HCT116 (cell line): ENCODE measurements at regions of chr2 and their contacts with region 1.

Region 1: GRCh38 chr2:68157402-68158133 is at the start of gene PNO1:
- DNase-seq: peak; percentile 92
- ATAC-seq: peak; percentile 93
- H3K4me3 ChIP-seq: peak within 1 kb of the TSS; percentile 77 to 92
- H3K27ac ChIP-seq: peak within 1 kb of the TSS; percentile 85
- H3K4me1 ChIP-seq: peaks cover 3 to 13% of the 10 kb centered on the region in 2 experiments; a peak in 3 of 4 replicates
- H3K27me3 ChIP-seq: no peaks in the 10 kb centered on the region
- CTCF ChIP-seq: no peak
- POLR2A ChIP-seq: peak; percentile 46
- RAD21 ChIP-seq: no peak
- total RNA-seq, gene PNO1: 23.3 TPM

Region 2: GRCh38 chr2:68062680-68063387 is 94.7 kb before region 1 on chr2 and contains the start of gene C1D:
- CTCF ChIA-PET with region 1: no interaction called
- POLR2A ChIA-PET with region 1: no interaction called
- RAD21 ChIA-PET with region 1: no interaction called
- intact Hi-C with region 1: loop called (anchors 1 kb)
- DNase-seq: peak; percentile 80
- ATAC-seq: peak; percentile 92
- H3K4me3 ChIP-seq: peak within 1 kb of the TSS; percentile 77 to 96
- H3K27ac ChIP-seq: peak within 1 kb of the TSS; percentile 44
- H3K4me1 ChIP-seq: peaks cover 0 to 10% of the 10 kb centered on the region in 2 experiments; a peak in 2 of 4 replicates
- H3K27me3 ChIP-seq: no peaks in the 10 kb centered on the region
- CTCF ChIP-seq: no peak
- POLR2A ChIP-seq: peak; percentile 92
- RAD21 ChIP-seq: no peak
- total RNA-seq, gene C1D: 21.1 TPM

Region 3: DNA sequence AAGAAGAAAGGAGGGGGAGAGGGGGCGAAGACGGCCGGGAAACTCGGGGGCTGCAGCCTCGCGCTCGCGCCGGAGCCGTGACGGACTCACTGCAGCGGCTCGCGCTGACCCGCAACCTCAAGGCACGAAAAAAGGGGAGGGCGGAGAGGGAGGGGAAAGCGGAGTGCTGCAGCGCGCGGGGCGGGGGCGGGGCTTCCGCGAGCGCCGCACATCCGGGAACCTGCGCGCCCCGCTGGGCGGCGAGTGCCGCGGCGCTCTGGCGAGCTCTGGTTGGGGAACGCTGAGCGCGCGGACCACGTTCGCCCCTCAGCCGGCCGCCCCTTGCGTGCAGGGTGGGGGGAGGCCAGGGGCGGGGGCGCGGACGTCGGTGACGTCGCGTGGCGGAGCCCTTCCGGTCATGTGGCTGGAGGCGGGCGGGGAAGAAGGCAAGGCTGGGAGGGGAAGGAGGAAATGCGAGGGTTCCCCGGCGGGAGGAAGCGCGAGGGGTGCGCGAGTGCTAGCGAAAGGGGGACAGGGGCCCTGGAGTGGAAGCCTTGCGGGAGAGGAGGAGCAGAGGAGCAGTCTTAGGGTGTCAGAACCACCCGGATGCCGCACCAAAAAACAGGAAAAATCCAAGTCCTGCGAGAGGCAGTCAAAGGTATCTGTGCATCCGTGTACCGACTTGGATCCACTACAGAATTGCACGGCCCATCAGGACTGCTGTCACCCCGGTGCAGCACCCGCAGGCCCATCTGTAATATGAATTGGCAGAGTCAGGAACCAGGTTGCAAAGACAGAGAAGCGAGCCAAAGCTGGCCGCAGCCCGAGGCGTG is 95.0 kb after region 1 on chr2 and contains the start of gene PPP3R1:
- CTCF ChIA-PET with region 1: no interaction called
- POLR2A ChIA-PET with region 1: no interaction called
- RAD21 ChIA-PET with region 1: no interaction called
- intact Hi-C with region 1: loop called (anchors 2 kb)
- DNase-seq: peak; percentile 85
- ATAC-seq: peak; percentile 90
- H3K4me3 ChIP-seq: peak within 1 kb of the TSS; percentile 85 to 93
- H3K27ac ChIP-seq: peak within 1 kb of the TSS; percentile 83
- H3K4me1 ChIP-seq: peaks cover 7 to 22% of the 10 kb centered on the region in 2 experiments; a peak in 3 of 4 replicates
- H3K27me3 ChIP-seq: no peaks in the 10 kb centered on the region
- CTCF ChIP-seq: no peak
- POLR2A ChIP-seq: peak; percentile 69
- RAD21 ChIP-seq: no peak
- total RNA-seq, gene PPP3R1: 69.9 TPM

Region 4: GRCh38 chr2:68319398-68320117 is 162.0 kb after region 1 on chr2 and contains the start of gene CNRIP1:
- CTCF ChIA-PET with region 1: no interaction called
- POLR2A ChIA-PET with region 1: no interaction called
- RAD21 ChIA-PET with region 1: no interaction called
- intact Hi-C with region 1: no loop called
- DNase-seq: no peak
- ATAC-seq: no peak
- H3K4me3 ChIP-seq: no peak within 1 kb of the TSS
- H3K27ac ChIP-seq: no peak within 1 kb of the TSS
- H3K4me1 ChIP-seq: no peaks in the 10 kb centered on the region
- H3K27me3 ChIP-seq: no peaks in the 10 kb centered on the region
- CTCF ChIP-seq: no peak
- POLR2A ChIP-seq: no peak
- RAD21 ChIP-seq: no peak
- total RNA-seq, gene CNRIP1: not detected